Sciatic nerve (tissue), 2 donors: ENCODE measurements at regions of chr17 and their contacts with region 1.

Region 1: GRCh38 chr17:64216000-64216337 is 47.1 kb downstream of the TEX2 start:
- DNase-seq: no peak
- ATAC-seq: no peak

Region 2: GRCh38 chr17:64232466-64233400 is 16.8 kb after region 1 on chr17:
- intact Hi-C with region 1: loop called (anchors 1 kb)
- DNase-seq: no peak
- ATAC-seq: no peak